PC-9 (cell line): ENCODE measurements at regions of chr5 and their contacts with region 1.

Region 1: DNA sequence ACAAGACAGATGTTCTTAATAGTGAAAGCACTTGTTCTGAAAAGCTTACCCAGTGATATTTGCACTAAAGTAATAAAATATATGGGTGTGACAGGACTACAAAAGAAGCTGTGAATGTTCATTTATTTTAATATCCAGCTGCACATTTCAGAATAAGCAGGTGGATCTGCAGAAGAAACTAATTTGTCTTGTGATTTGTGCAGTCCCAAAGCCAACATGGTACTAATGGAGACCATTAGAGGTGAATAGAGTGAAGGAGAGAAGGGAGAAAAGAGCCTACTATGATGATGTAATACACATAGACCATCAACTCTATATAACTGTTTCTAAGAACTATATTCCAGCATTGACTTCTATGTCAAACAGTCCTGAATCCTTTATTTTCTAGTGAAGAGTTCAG is 362.8 kb downstream of the ISL1 start:
- DNase-seq: no peak
- H3K4me3 ChIP-seq: no peak overlapping the region
- H3K27ac ChIP-seq: no peak overlapping the region
- H3K4me1 ChIP-seq: no peaks in the 10 kb centered on the region
- H3K27me3 ChIP-seq: no peaks in the 10 kb centered on the region
- CTCF ChIP-seq: no peak

Region 2: DNA sequence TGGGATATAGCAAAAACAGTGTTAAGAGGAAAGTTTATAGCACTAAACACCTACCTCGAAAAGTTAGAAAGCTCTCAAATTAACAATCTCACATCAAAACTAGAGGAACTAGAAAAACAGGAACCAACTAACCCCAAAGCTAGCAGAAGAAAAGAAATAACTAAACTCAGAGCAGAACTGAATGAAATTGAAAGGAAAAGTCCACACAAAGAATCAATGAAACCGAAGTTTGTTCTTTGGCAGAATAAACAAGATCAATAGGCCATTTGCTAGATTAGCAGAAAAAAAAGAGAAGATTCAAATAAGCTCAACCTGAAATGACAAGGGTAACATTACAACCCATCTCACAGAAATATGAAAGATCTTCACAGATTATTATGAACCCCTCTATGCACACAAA is 597.6 kb before region 1 on chr5:
- CTCF ChIA-PET with region 1: no interaction called
- POLR2A ChIA-PET with region 1: interaction called, 32 read pairs
- intact Hi-C with region 1: no loop called
- DNase-seq: no peak
- H3K4me3 ChIP-seq: no peak overlapping the region
- H3K27ac ChIP-seq: no peak overlapping the region
- H3K4me1 ChIP-seq: no peaks in the 10 kb centered on the region
- H3K27me3 ChIP-seq: no peaks in the 10 kb centered on the region
- CTCF ChIP-seq: no peak

Region 3: GRCh38 chr5:51414516-51414915 is 331.5 kb before region 1 on chr5:
- CTCF ChIA-PET with region 1: no interaction called
- POLR2A ChIA-PET with region 1: no interaction called
- intact Hi-C with region 1: no loop called
- DNase-seq: no peak
- H3K4me3 ChIP-seq: no peak overlapping the region
- H3K27ac ChIP-seq: no peak overlapping the region
- H3K4me1 ChIP-seq: no peaks in the 10 kb centered on the region
- H3K27me3 ChIP-seq: no peaks in the 10 kb centered on the region
- CTCF ChIP-seq: no peak